Right lobe of liver (tissue), 6 donors: ENCODE measurements at regions of chr9 and their contacts with region 1.

Region 1: GRCh38 chr9:10661994-10662393 is 49.2 kb upstream of the PTPRD start:
- DNase-seq: no peak
- ATAC-seq: no peak
- H3K4me3 ChIP-seq: no peak overlapping the region
- H3K27ac ChIP-seq: no peak overlapping the region
- H3K4me1 ChIP-seq: no peaks in the 10 kb centered on the region
- H3K27me3 ChIP-seq: no peaks in the 10 kb centered on the region
- CTCF ChIP-seq: no peak
- POLR2A ChIP-seq: no peak

Region 2: DNA sequence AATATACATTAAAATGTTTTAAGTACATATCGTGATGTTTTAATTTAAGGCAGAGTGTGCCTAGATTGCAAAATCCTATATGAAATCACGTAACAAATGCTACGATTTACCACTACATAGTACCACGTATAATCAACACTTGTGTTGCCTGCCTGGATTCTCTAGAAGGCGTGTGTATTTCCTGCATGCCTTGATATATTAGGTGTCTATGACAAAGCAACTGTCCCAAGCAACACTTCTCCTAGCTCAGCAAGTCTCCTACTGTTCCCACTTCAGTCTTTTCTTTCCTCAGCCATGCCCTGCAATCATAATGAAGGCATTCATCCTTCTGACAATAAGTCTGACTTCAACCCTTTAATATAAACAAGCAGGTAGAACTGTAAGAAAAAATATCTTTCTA is 138.8 kb before region 1 on chr9:
- intact Hi-C with region 1: no loop called
- DNase-seq: no peak
- ATAC-seq: no peak
- H3K4me3 ChIP-seq: no peak overlapping the region
- H3K27ac ChIP-seq: no peak overlapping the region
- H3K4me1 ChIP-seq: no peaks in the 10 kb centered on the region
- H3K27me3 ChIP-seq: no peaks in the 10 kb centered on the region
- CTCF ChIP-seq: no peak
- POLR2A ChIP-seq: no peak

Region 3: DNA sequence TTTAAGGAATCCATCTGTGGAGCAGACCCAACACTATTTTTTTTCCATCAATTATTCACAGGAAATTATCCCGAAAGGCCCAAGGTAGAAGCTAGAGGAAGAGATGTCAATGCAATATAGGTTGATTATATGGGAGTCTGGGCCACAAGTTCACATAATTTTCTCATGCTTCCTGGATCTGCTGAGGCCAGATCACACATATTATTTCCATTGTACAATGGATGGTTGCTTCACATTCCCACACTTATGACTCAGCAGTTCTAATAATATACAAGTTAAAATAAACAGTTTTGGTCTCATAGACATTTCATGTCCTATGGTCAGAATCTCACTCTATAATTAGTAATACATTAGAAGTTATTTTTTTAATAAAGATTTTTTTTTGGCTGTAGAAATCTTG is 16.8 kb after region 1 on chr9:
- intact Hi-C with region 1: loop called in 1 of 2 experiments (anchors 1 kb)
- DNase-seq: no peak
- ATAC-seq: no peak
- H3K4me3 ChIP-seq: no peak overlapping the region
- H3K27ac ChIP-seq: no peak overlapping the region
- H3K4me1 ChIP-seq: no peaks in the 10 kb centered on the region
- H3K27me3 ChIP-seq: no peaks in the 10 kb centered on the region
- CTCF ChIP-seq: no peak
- POLR2A ChIP-seq: no peak